ENCODE measurements at regions of chr12 and their contacts with region 1.

Region 1: DNA sequence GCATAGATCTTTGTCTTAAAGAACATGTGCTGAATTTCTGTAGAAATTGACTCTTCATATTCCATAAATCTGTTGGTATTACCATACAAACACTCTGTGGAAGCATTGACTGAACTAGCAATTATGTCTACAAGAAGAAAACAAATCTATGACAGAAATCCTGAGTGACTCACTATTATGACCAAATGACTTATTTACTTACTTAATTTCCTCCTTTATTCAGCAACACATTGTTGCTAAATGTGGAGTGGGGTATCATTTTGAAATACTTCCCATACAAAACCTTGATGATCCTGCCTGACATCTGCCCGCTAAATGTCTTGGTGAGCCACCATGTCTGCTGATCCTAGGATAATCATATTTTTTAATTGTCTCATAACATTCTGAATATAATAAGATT is 99.1 kb upstream of the SLCO1C1 start:
- DNase-seq: no peak
- H3K4me3 ChIP-seq: no peak overlapping the region
- H3K27ac ChIP-seq: no peak overlapping the region
- H3K4me1 ChIP-seq: no peaks in the 10 kb centered on the region
- H3K27me3 ChIP-seq: no peaks in the 10 kb centered on the region
- CTCF ChIP-seq: no peak
- POLR2A ChIP-seq: no peak

Region 2: GRCh38 chr12:20451761-20452160 is 144.3 kb before region 1 on chr12:
- intact Hi-C with region 1: loop called (anchors 10 kb)
- DNase-seq: no peak
- H3K4me3 ChIP-seq: no peak overlapping the region
- H3K27ac ChIP-seq: no peak overlapping the region
- H3K4me1 ChIP-seq: no peaks in the 10 kb centered on the region
- H3K27me3 ChIP-seq: no peaks in the 10 kb centered on the region
- CTCF ChIP-seq: no peak
- POLR2A ChIP-seq: no peak